ENCODE measurements at regions of chr3 and their contacts with region 1.

Region 1: DNA sequence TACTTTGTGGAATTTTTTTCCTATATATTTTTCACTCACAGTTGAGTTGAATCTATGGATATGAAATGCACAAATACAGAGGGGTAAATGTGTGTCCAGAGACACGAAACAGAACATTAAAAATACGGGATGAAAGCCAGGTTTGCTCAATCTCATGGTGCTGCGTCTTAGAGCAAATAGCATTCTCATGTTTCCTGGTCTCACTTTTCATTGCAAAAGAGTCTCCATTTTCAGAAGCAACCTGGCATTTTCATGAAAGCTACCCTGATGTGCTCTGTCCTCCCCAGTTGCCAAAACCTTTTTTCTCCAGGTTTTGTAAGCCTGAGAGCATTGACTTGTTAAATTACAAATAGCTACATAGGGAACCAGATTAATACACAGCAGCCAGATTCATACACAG is 49.5 kb upstream of the MBNL1 start:
- DNase-seq: no peak
- ATAC-seq: no peak
- H3K4me3 Mint-ChIP-seq: peak overlapping the region; percentile 83
- H3K27ac Mint-ChIP-seq: peak overlapping the region; percentile 15
- H3K4me1 Mint-ChIP-seq: peaks cover 55% of the 10 kb centered on the region
- H3K27me3 Mint-ChIP-seq: no peaks in the 10 kb centered on the region

Region 2: GRCh38 chr3:152205097-152205593 is 14.1 kb before region 1 on chr3:
- POLR2A ChIA-PET with region 1: interaction called, 29 read pairs
- DNase-seq: no peak
- ATAC-seq: peak; percentile 41
- H3K4me3 Mint-ChIP-seq: peak overlapping the region; percentile 95
- H3K27ac Mint-ChIP-seq: peak overlapping the region; percentile 87
- H3K4me1 Mint-ChIP-seq: peaks cover 47% of the 10 kb centered on the region
- H3K27me3 Mint-ChIP-seq: no peaks in the 10 kb centered on the region

Region 3: GRCh38 chr3:152258448-152259393 is 39.5 kb after region 1 on chr3:
- POLR2A ChIA-PET with region 1: no interaction called
- DNase-seq: no peak
- ATAC-seq: peak; percentile 50
- H3K4me3 Mint-ChIP-seq: peak overlapping the region; percentile 79
- H3K27ac Mint-ChIP-seq: peak overlapping the region; percentile 91
- H3K4me1 Mint-ChIP-seq: peaks cover 74% of the 10 kb centered on the region
- H3K27me3 Mint-ChIP-seq: no peaks in the 10 kb centered on the region